ENCODE measurements at regions of chr20 and their contacts with region 1.

Region 1: GRCh38 chr20:35883778-35884540 is 70.3 kb downstream of the SCAND1 start:
- DNase-seq: peak; percentile 26 to 69 (median 60)
- ATAC-seq: peak; percentile 93
- H3K4me3 ChIP-seq: no peak overlapping the region
- H3K4me3 Mint-ChIP-seq: peak overlapping the region in 1 of 10 donors; percentile 3
- H3K27ac ChIP-seq: no peak overlapping the region
- H3K27ac Mint-ChIP-seq: peak overlapping the region in 8 of 9 donors; percentile 10 to 74 (median 51)
- H3K4me1 ChIP-seq: no peaks in the 10 kb centered on the region
- H3K4me1 Mint-ChIP-seq: peaks cover 10 to 22% (median 16%) of the 10 kb centered on the region in 7 donors
- H3K27me3 ChIP-seq: no peaks in the 10 kb centered on the region
- H3K27me3 Mint-ChIP-seq: no peaks in the 10 kb centered on the region

Region 2: GRCh38 chr20:35432430-35432735 is 451.6 kb before region 1 on chr20:
- CTCF ChIA-PET with region 1: no interaction called
- POLR2A ChIA-PET with region 1: no interaction called
- intact Hi-C with region 1: no loop called
- DNase-seq: peak in 2 of 9 donors; percentile 25 to 26
- ATAC-seq: peak; percentile 38
- H3K4me3 ChIP-seq: no peak overlapping the region
- H3K4me3 Mint-ChIP-seq: no peak overlapping the region
- H3K27ac ChIP-seq: no peak overlapping the region
- H3K27ac Mint-ChIP-seq: peak overlapping the region in 2 of 9 donors; percentile 56 to 74
- H3K4me1 ChIP-seq: no peaks in the 10 kb centered on the region
- H3K4me1 Mint-ChIP-seq: peaks cover 0 to 14% (median 0%) of the 10 kb centered on the region in 7 donors
- H3K27me3 ChIP-seq: no peaks in the 10 kb centered on the region
- H3K27me3 Mint-ChIP-seq: peaks cover 0 to 2% (median 0%) of the 10 kb centered on the region in 5 donors

Region 3: GRCh38 chr20:35511814-35512420 is 372.0 kb before region 1 on chr20:
- CTCF ChIA-PET with region 1: interaction called, 3 read pairs
- POLR2A ChIA-PET with region 1: no interaction called
- intact Hi-C with region 1: loop called in 1 of 2 experiments (anchors 1 kb)
- DNase-seq: no peak
- ATAC-seq: no peak
- H3K4me3 ChIP-seq: no peak overlapping the region
- H3K4me3 Mint-ChIP-seq: no peak overlapping the region
- H3K27ac ChIP-seq: no peak overlapping the region
- H3K27ac Mint-ChIP-seq: peak overlapping the region in 5 of 9 donors; percentile 12 to 86 (median 67)
- H3K4me1 ChIP-seq: no peaks in the 10 kb centered on the region
- H3K4me1 Mint-ChIP-seq: peaks cover under 1 to 5% (median 3%) of the 10 kb centered on the region in 7 donors
- H3K27me3 ChIP-seq: no peaks in the 10 kb centered on the region
- H3K27me3 Mint-ChIP-seq: no peaks in the 10 kb centered on the region

Region 4: GRCh38 chr20:35561268-35561667 is 322.7 kb before region 1 on chr20:
- CTCF ChIA-PET with region 1: no interaction called
- POLR2A ChIA-PET with region 1: no interaction called
- intact Hi-C with region 1: loop called in 1 of 2 experiments (anchors 1 kb)
- DNase-seq: peak in 5 of 9 donors; percentile 14 to 23 (median 16)
- ATAC-seq: peak; percentile 65
- H3K4me3 ChIP-seq: no peak overlapping the region
- H3K4me3 Mint-ChIP-seq: no peak overlapping the region
- H3K27ac ChIP-seq: no peak overlapping the region
- H3K27ac Mint-ChIP-seq: peak overlapping the region in 1 of 9 donors; percentile 9
- H3K4me1 ChIP-seq: no peaks in the 10 kb centered on the region
- H3K4me1 Mint-ChIP-seq: no peaks in the 10 kb centered on the region
- H3K27me3 ChIP-seq: no peaks in the 10 kb centered on the region
- H3K27me3 Mint-ChIP-seq: no peaks in the 10 kb centered on the region

Region 5: DNA sequence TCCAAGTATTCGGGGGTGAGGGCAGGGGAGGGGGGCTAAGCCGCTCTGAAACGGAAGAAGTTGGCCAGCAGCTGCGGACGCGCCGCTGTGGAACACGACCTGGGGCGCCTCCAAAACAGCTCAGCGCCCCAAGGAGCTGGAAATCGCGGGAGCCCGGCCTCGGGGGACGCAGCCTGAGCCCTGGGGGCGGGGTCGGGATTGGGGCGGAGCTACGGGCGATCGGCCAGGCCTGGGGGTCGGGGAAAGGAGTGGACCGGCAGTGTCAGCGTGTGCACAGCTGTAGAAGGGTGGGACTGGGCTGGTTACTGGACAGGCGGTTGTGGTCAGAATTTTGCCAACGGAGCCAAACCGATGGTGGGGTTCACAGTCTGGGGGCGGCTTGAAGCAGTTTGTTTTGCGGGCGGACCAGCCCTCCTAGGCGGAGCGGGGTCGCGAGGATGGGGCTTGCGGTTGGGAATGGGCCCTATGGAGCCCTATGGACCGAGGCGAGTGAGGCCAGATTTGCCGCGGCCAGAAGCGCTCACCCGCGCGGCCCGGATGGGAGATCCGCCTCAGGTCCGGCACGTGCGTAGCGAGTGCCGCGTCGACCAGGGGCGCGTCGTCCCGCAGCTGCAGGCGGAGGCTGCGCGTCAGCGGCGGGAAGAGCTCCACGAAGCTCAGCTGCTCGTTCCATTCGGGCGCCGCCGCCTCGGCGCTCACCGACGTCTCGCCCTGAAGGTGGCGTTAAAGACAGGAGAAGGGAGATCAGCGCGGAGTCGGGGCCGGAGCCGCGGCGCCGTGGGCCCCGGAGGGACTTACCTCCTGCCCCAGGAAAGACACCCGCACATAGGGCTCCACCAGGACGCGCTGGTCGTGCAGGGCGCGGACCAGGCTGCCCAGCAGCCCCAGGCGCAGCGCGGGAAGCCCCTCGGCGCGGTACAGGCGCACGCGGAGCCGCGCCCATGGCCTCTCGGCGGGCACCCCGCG is 282.7 kb before region 1 on chr20:
- CTCF ChIA-PET with region 1: interaction called, 13 read pairs
- POLR2A ChIA-PET with region 1: no interaction called
- intact Hi-C with region 1: loop called (anchors 1 kb)
- DNase-seq: peak; percentile 66 to 82 (median 77)
- ATAC-seq: peak; percentile 95
- H3K4me3 ChIP-seq: peak overlapping the region; percentile 72
- H3K4me3 Mint-ChIP-seq: peak overlapping the region; percentile 72 to 84 (median 80)
- H3K27ac ChIP-seq: peak overlapping the region; percentile 36
- H3K27ac Mint-ChIP-seq: peak overlapping the region in 1 of 9 donors; percentile 10
- H3K4me1 ChIP-seq: peaks cover 5 to 6% of the 10 kb centered on the region in 2 donors
- H3K4me1 Mint-ChIP-seq: peaks cover 0 to 11% (median 6%) of the 10 kb centered on the region in 7 donors
- H3K27me3 ChIP-seq: peaks cover 0 to 5% of the 10 kb centered on the region in 2 donors
- H3K27me3 Mint-ChIP-seq: peaks cover 0 to 65% (median 5%) of the 10 kb centered on the region in 5 donors

Region 6: DNA sequence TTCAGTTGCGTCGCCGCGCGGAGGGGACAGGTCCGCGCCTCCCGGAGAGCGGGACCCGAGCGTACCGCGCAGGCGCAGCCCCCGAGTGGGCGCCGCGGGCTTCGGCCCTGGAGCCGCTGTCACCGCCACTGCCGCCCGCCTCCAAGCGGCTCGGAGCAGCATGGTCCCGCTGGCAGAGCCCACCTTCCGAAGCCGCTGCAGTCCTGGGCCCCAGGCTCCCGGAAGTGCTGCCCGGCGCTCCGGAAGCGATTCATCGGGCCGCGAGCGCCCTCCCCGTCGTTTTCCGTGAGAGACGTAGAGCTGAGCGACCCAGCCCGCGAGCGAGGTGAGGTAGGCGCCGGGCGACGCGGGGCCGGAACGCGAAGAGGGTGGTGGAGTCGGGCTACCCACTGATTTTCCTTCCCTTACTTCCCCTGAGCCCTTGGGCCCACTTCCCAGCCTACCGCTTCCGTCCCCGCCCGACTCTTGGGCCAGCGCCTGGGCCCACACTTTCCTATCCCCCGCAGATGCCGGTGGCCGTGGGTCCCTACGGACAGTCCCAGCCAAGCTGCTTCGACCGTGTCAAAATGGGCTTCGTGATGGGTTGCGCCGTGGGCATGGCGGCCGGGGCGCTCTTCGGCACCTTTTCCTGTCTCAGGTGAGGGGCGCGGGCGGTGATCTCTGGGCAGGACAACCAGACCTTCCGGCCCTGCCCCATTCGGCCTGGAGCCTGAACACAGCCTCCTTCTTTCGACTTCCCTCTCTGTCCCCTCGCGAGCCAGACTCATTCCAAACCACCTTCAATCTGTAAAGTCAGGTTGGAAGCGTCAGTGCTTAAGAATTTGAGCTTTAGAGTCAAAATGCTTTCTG is 184.6 kb before region 1 on chr20 and contains the starts of genes NFS1 and ROMO1:
- CTCF ChIA-PET with region 1: interaction called, 3 read pairs
- POLR2A ChIA-PET with region 1: interaction called, 5 read pairs
- intact Hi-C with region 1: loop called in 1 of 2 experiments (anchors 1 kb)
- DNase-seq: peak; percentile 71 to 87 (median 82)
- ATAC-seq: peak; percentile 92
- H3K4me3 ChIP-seq: peak within 1 kb of the TSS; percentile 89
- H3K4me3 Mint-ChIP-seq: peak within 1 kb of the TSS; percentile 90 to 99 (median 98)
- H3K27ac ChIP-seq: peak within 1 kb of the TSS; percentile 87
- H3K27ac Mint-ChIP-seq: peak within 1 kb of the TSS; percentile 95 to 99 (median 97)
- H3K4me1 ChIP-seq: peaks cover 13 to 16% of the 10 kb centered on the region in 2 donors
- H3K4me1 Mint-ChIP-seq: peaks cover 15 to 66% (median 52%) of the 10 kb centered on the region in 7 donors
- H3K27me3 ChIP-seq: no peaks in the 10 kb centered on the region
- H3K27me3 Mint-ChIP-seq: no peaks in the 10 kb centered on the region
- total RNA-seq, gene NFS1: 18.2 to 41.1 (median 35.0) TPM
- total RNA-seq, gene ROMO1: 33.2 to 85.5 (median 38.5) TPM

Measured in naive thymus-derived CD4-positive, alpha-beta T cell (primary cell).